ENCODE measurements at regions of chr3 and their contacts with region 1.

Region 1: DNA sequence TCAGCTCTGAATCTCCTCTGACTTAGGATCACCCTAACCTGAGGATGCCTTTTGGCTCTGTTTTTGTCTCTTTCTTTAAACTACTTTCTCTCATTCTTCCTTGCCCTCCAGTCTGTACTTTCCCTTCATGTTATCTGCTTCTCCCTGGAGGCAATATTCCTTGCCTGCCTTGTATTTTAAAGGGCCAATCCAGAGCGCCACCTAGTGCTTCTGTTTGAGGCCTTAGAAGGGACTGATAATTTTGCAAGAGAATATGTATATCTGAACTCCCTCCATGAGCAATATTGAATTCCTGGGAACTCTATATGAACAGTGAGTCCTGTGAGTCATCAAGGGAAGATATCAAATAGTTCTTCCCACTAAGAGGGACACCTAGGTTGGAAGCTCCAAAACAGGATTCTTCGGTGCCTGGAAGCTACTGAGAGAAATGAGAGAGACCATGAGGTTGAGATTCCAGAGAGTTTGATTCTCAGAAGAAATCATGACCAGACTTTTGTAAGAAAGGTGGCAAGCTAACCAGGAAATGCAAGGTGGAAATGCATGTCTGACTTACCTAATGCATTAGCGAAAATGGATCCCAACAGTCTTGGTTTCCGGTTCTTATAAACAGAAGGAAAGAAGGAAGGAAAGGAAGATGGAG is 203.8 kb upstream of the CD96 start:
- DNase-seq: peak; percentile 60
- ATAC-seq: no peak
- H3K4me3 Mint-ChIP-seq: no peak overlapping the region
- H3K27ac Mint-ChIP-seq: no peak overlapping the region
- H3K4me1 Mint-ChIP-seq: peaks cover 17% of the 10 kb centered on the region
- H3K27me3 Mint-ChIP-seq: no peaks in the 10 kb centered on the region
- CTCF ChIP-seq: peak; percentile 73

Region 2: DNA sequence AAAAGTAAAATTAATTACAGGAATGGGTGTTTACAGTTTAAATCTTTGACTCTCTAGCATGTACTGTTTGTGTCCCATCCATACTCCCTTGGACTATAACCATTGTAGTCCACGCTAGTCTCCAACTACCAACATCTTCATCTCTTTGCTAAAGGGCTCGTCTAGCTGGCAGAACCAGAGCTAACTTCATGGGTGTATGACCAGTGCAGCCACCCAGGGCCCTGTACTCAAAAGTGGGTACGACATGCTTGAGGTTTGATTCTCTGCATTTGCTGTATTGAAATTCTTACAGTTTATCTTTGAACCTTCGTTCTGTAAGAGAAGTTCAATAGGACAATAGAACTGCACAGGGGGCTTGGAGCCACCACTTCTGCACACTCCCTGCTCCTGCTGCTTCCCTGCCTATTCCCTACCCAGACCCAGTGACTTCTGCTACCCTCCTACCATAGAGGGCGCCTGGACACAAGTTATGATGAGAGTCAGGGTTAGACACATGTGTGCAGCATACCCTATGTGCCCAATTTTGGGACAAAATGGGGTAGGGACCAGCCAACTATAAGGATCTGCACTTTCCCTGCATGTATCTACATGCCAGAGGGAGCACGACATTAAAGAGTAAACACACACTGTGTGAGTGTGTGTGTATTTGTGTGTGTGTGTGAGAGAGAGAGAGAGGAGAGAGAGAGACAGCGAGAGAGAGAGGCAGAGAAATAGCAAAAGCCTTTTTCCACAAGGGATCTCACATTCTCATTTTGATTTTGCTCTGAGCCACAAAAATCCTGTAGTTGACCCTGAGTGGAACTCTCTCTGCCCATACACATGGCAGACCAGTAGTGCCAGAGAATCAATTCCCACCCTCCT is 325.6 kb before region 1 on chr3:
- CTCF ChIA-PET with region 1: no interaction called
- POLR2A ChIA-PET with region 1: no interaction called
- intact Hi-C with region 1: loop called (anchors 5 kb)
- DNase-seq: peak; percentile 22
- ATAC-seq: no peak
- H3K4me3 Mint-ChIP-seq: no peak overlapping the region
- H3K27ac Mint-ChIP-seq: no peak overlapping the region
- H3K4me1 Mint-ChIP-seq: no peaks in the 10 kb centered on the region
- H3K27me3 Mint-ChIP-seq: no peaks in the 10 kb centered on the region
- CTCF ChIP-seq: no peak

Region 3: GRCh38 chr3:111087924-111088469 is 250.2 kb before region 1 on chr3:
- CTCF ChIA-PET with region 1: no interaction called
- POLR2A ChIA-PET with region 1: no interaction called
- intact Hi-C with region 1: loop called (anchors 5 kb)
- DNase-seq: no peak
- ATAC-seq: no peak
- H3K4me3 Mint-ChIP-seq: no peak overlapping the region
- H3K27ac Mint-ChIP-seq: no peak overlapping the region
- H3K4me1 Mint-ChIP-seq: peaks cover 2% of the 10 kb centered on the region
- H3K27me3 Mint-ChIP-seq: no peaks in the 10 kb centered on the region
- CTCF ChIP-seq: no peak

Measured in activated CD8-positive, alpha-beta T cell treated with anti-CD3 and anti-CD28 coated beads for 36 hours (primary cell).